Uterus (tissue), 4 donors: ENCODE measurements at regions of chr17 and their contacts with region 1.

Region 1: GRCh38 chr17:56715613-56716357 is 117.9 kb downstream of the C17orf67 start:
- DNase-seq: peak; percentile 57 to 59
- H3K4me3 ChIP-seq: no peak overlapping the region
- H3K27ac ChIP-seq: no peak overlapping the region
- H3K4me1 ChIP-seq: no peaks in the 10 kb centered on the region
- H3K27me3 ChIP-seq: no peaks in the 10 kb centered on the region
- CTCF ChIP-seq: peak; percentile 56 to 78 (median 68)
- POLR2A ChIP-seq: no peak

Region 2: DNA sequence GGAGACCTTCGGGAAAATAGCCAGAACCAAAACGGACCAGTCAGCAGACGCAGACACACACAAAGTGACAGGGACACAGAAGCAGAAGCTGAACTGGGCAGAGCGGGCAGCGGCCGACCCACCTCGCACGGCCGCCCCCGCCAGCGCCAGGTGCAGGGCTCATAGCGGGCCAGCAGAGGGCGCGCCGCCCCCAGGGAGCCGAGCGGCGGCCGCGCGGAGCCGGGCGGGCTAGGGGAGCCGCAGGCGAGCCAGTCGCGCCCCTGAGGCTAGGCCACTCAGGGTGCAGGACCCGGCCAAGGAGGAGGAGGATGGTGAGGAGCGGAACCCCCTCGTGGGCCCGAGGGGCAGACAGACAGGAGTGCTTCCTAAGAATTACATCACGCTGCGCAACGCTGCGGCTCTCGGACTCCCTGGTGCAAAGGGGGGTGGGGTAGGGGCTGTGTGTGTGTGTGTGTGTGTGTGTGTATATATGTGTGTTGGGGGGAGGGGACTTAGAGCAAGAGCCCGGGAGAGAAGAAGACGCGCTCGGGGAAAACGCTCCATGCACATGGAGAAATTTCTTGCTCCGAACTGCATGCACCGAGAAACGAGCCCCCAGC is 123.2 kb before region 1 on chr17:
- intact Hi-C with region 1: loop called (anchors 10 kb)
- DNase-seq: peak; percentile 18 to 47
- H3K4me3 ChIP-seq: peak overlapping the region; percentile 22 to 39
- H3K27ac ChIP-seq: no peak overlapping the region
- H3K4me1 ChIP-seq: peaks cover 0 to 28% of the 10 kb centered on the region in 2 donors
- H3K27me3 ChIP-seq: peaks cover 9 to 35% of the 10 kb centered on the region in 2 donors
- CTCF ChIP-seq: peak; percentile 56 to 96 (median 92)
- POLR2A ChIP-seq: no peak